AG04450 (cell line): ENCODE measurements at regions of chr7 and their contacts with region 1.

Region 1: GRCh38 chr7:137656227-137656849 is 190.4 kb downstream of the DGKI start:
- DNase-seq: peak; percentile 44
- H3K4me3 ChIP-seq: no peak overlapping the region
- H3K27ac ChIP-seq: no peak overlapping the region
- H3K27me3 ChIP-seq: no peaks in the 10 kb centered on the region
- CTCF ChIP-seq: peak; percentile 92

Region 2: DNA sequence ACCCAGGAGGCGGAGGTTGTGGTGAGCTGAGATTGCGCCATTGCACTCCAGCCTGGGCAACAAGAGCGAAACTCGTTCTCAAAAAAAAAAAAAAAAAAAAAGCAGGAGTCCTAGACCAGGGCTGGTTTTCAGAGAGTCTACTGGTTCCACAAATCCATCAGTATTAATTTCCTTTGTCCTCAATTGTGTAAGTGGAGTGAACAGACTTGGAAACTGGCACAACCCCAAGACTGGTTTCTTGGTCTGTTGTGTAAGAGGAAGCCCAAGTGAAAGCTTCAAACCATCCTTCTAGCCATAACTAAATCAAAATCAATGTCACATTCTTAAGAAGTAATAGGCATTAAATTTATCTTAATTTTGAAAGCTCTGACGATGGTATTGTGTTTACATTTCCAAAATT is 23.2 kb before region 1 on chr7:
- CTCF ChIA-PET with region 1: interaction called, 24 read pairs
- POLR2A ChIA-PET with region 1: no interaction called
- DNase-seq: no peak
- H3K4me3 ChIP-seq: no peak overlapping the region
- H3K27ac ChIP-seq: no peak overlapping the region
- H3K27me3 ChIP-seq: no peaks in the 10 kb centered on the region
- CTCF ChIP-seq: no peak

Region 3: GRCh38 chr7:137681657-137682562 is 25.6 kb after region 1 on chr7:
- CTCF ChIA-PET with region 1: interaction called, 28 read pairs
- POLR2A ChIA-PET with region 1: no interaction called
- DNase-seq: peak; percentile 62
- H3K4me3 ChIP-seq: no peak overlapping the region
- H3K27ac ChIP-seq: peak overlapping the region; percentile 68
- H3K27me3 ChIP-seq: no peaks in the 10 kb centered on the region
- CTCF ChIP-seq: no peak

Region 4: DNA sequence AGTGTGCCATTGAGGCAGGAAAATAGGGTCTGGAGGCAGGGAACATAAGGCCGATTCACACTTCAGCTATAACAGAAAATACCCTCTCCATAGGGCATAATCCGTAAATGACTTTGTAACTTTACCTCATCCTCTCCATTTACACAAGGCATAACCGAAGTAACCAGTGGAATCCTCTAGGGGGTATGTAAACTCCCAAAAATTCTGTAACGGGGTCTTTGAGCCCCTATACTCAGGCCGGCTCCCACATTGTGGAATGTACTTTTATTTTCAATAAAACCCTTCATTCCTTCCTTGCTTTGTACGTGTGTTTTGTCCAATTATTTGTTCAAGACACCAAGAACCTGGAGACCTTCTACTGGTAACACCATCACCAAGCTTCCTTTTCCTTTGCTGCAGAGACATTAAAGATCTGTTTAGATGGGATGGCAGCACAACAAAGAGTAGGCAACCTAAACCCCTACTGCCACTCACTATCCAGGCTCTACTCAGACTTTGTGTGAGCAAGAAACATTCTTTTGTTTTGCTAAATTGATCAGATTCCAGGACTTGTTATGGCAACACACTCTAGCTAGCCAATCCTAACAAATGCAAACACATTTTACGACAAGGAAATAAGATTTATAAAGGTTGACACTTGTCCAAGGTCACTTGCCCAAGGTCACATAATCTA is 91.2 kb after region 1 on chr7:
- CTCF ChIA-PET with region 1: no interaction called
- POLR2A ChIA-PET with region 1: no interaction called
- DNase-seq: no peak
- H3K4me3 ChIP-seq: no peak overlapping the region
- H3K27ac ChIP-seq: no peak overlapping the region
- H3K27me3 ChIP-seq: peaks cover 2% of the 10 kb centered on the region
- CTCF ChIP-seq: no peak

Region 5: DNA sequence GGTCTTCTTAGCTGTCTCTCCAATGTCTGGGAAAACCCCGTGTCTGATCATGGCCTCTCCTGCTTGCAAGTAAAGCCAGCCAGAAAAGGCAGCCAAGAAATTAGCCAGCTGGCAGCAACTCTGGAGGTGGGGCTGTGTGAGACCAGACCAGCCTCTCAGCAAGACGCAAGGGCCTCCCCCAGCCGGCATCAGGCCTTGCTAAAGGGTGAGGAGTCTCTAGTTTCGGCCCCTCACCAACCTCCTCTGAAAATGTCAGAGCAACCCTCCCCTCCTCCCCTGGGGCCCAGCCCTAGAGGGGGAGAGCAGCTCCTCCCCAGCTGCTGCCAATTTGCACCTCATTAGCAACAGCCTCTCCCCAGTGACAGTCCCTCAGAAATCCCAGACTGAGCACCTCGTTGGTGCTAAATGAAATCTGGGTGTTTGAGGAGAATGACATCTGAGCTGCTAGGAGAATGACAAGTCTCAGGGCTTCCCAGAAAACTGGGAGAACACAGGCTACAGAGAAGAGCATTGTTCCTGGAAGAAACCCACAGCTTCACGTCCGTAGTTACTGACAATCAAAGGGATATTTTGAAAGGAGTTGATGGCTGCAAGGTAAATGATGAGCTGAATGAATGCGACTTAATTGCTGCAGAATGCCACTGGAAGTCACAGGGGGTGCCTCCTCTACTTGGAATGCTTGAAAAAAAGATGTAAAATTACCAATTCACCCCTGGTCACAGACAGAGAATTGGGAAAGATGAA is 164.5 kb after region 1 on chr7:
- CTCF ChIA-PET with region 1: interaction called, 24 read pairs
- POLR2A ChIA-PET with region 1: no interaction called
- DNase-seq: peak; percentile 34
- H3K4me3 ChIP-seq: no peak overlapping the region
- H3K27ac ChIP-seq: no peak overlapping the region
- H3K27me3 ChIP-seq: no peaks in the 10 kb centered on the region
- CTCF ChIP-seq: no peak

Region 6: DNA sequence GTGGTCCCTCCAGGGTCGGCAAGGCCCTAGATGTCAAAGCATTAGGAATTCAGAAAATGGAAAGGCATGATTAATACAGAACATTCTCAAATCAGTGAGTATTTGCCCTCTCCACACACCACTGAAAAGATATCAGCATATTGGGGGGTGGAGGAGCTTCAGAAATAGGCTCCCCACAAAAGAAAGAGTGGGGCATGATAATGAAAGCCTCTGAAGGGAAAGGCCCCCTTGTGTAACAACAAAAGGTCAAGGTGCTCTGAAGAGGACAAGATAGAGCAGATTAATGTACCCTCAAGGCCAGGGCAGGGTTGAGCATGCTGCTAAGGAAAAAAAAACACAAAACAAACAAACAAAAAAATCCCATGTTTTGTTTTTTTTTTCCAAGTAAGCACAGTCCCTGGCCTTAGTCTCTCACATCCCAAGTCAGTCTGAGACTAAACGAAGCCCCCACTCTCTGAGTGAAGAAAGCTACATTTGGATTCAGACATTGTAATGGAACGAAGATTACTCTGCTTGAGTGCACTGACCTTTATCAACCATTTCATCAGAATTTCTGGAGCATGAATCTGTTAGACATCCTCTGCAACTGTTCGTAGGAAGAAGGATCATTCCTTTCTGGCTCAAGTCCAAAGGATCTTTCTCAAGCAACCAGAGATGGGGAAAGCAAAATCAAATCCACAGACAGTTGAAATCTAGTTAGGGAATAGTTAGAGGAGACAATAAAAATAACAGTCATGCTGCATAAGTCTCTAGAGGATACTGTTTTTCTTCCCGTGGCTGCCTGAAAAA is 217.8 kb after region 1 on chr7:
- CTCF ChIA-PET with region 1: interaction called, 17 read pairs
- POLR2A ChIA-PET with region 1: no interaction called
- DNase-seq: peak; percentile 68
- H3K4me3 ChIP-seq: no peak overlapping the region
- H3K27ac ChIP-seq: peak overlapping the region; percentile 66
- H3K27me3 ChIP-seq: no peaks in the 10 kb centered on the region
- CTCF ChIP-seq: no peak

Region 7: DNA sequence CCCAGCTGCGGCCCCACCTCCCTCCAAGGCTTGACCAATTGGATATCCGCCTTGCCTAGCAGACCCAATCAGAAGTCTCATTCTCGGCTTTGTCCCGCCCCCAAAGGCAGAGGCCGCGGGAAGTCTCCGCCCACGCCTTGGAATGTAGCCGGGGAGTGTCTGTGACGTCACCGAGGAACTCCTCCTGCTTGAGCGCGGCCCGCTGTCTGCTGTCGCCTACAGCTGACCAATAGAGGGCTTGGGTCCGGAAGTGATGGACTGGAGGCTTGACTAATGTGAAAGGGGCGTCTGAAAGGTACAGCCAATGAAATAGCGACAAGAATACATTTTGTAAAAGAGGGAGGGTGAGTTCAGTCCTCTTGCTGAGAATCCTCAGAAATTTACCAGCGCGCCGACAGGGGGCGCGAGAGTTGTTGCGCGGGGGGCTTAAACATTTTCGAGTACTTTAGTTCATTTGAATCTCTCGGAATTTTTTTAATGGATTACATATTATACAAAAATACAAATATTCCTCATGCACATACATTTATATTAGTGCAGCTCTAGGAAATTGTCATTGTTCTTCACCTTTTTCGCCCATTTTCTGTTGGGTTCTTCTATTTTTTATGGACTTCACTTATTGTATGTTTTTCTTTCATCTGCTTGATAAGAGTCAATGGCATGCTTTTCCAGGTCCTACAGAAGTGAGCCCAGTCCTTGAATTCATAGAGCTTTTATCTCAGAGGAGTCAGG is 345.9 kb after region 1 on chr7:
- CTCF ChIA-PET with region 1: interaction called, 50 read pairs
- POLR2A ChIA-PET with region 1: no interaction called
- DNase-seq: peak; percentile 100
- H3K4me3 ChIP-seq: peak overlapping the region; percentile 97
- H3K27ac ChIP-seq: peak overlapping the region; percentile 99
- H3K27me3 ChIP-seq: no peaks in the 10 kb centered on the region
- CTCF ChIP-seq: peak; percentile 87